ENCODE measurements at regions of chr20 and their contacts with region 1.

Region 1: DNA sequence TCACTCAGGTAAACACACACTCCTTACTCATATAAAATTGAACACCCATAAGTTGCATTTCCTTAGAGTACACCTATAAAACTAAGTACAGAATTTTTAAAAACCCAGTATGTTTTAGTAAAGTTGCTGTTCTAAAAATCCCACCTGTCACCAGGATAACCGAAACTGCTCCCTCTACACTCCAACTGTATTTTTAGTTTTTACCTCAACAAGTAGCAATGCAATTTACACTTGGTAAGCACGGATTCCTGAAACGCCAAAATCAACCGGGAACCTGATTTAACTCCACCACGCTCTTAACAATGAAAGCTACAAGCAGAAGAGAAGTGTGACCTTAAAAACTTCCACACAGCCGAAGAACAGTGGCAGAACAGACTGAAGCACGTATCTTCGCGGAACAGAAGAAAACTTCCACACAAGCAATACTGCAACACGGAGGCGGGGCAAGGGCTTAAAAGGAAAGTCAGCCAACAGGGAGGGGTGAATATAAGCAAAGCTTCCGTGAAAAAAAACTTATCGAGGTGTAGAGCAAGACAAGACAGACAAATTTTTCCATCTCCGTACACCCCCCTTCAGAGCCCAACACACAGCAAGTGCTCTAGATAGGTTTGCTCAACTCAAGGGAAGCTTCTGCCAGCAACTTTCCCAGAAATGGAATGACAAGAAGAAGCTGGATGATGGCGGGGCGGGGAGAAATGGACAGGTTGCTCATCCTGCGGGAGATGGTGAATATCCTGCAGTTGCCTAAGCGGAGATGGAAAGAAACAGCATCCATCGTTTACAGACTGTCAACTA is 1.4 kb downstream of the STAU1 start:
- DNase-seq: peak; percentile 28
- ATAC-seq: no peak
- H3K4me3 ChIP-seq: peak overlapping the region; percentile 88 to 93
- H3K27ac ChIP-seq: peak overlapping the region; percentile 81
- H3K4me1 ChIP-seq: peaks cover 23% of the 10 kb centered on the region
- H3K27me3 ChIP-seq: no peaks in the 10 kb centered on the region
- CTCF ChIP-seq: no peak

Region 2: DNA sequence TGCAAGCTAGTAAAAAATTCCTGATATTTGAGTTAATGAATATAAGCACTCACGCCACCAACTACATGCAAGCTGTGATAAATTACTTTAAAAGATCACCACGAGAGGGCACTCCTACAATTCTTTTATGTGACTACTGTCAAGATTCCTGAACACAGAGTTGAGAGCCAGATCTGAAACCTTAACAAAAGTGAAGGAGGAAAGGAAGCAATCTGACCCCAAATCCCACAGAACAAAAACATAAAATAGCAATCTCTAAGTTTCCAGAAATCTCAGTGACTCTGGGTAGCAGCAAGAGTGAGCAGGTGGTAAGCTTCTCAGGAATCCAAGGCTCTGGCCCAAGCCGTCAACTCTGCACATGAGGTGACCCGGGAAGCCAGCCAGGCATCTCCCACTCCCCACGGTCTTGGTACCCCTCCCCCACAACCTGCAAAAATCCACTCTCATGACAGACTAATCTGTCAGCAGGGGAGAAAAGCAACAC is 53.7 kb before region 1 on chr20:
- CTCF ChIA-PET with region 1: no interaction called
- POLR2A ChIA-PET with region 1: no interaction called
- in situ Hi-C with region 1: loop called (anchors 10 kb)
- intact Hi-C with region 1: no loop called
- DNase-seq: peak; percentile 18
- ATAC-seq: peak; percentile 86
- H3K4me3 ChIP-seq: no peak overlapping the region
- H3K27ac ChIP-seq: no peak overlapping the region
- H3K4me1 ChIP-seq: no peaks in the 10 kb centered on the region
- H3K27me3 ChIP-seq: no peaks in the 10 kb centered on the region
- CTCF ChIP-seq: peak; percentile 72

Region 3: GRCh38 chr20:49207076-49207475 is 20.3 kb after region 1 on chr20:
- CTCF ChIA-PET with region 1: no interaction called
- POLR2A ChIA-PET with region 1: interaction called, 17 read pairs
- in situ Hi-C with region 1: no loop called
- intact Hi-C with region 1: no loop called
- DNase-seq: no peak
- ATAC-seq: peak; percentile 83
- H3K4me3 ChIP-seq: no peak overlapping the region
- H3K27ac ChIP-seq: no peak overlapping the region
- H3K4me1 ChIP-seq: no peaks in the 10 kb centered on the region
- H3K27me3 ChIP-seq: no peaks in the 10 kb centered on the region
- CTCF ChIP-seq: no peak

Region 4: DNA sequence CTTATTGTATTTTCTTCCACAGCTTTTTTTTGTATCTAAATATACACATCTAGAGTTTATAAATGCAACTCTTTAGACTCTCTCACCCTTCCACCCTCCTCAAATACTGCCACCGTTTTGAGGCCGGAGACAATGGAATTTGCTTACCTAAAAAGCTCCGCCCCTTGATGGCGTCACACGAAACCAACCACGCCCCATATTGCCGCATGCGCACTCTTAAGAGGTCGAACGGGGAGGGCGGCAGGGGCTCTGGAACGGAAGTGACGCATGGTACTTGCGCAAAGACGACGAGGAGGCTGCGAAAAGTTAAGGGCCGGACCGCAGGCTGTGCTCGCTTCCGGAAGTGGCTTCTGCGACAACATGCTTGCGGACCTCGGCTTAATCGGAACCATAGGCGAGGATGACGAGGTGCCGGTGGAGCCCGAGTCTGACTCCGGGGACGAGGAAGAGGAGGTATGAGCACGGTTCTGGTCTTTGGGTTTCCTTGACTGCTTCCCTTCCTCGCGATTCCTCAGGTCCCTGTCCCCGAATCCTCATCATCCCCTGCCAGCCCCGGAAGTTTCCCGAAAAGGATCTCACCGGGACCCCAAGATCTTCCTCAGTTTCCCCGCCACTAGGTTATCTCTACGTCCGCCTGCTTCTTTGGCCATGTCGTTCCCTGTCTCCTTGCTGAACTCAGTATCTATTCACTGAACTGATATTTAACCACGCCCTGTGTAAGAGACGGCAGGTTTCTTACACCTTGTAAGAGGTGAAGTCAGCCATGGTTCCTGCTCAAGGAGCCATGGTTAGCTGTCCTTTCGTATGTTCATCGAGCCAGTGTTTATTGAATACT is 32.6 kb after region 1 on chr20 and contains the start of gene DDX27:
- CTCF ChIA-PET with region 1: no interaction called
- POLR2A ChIA-PET with region 1: interaction called, 11 read pairs
- in situ Hi-C with region 1: no loop called
- intact Hi-C with region 1: no loop called
- DNase-seq: peak; percentile 99
- ATAC-seq: peak; percentile 97
- H3K4me3 ChIP-seq: peak within 1 kb of the TSS; percentile 96 to 99
- H3K27ac ChIP-seq: peak within 1 kb of the TSS; percentile 99
- H3K4me1 ChIP-seq: peaks cover 10% of the 10 kb centered on the region; the same call in 1 of the 2 replicates
- H3K27me3 ChIP-seq: no peaks in the 10 kb centered on the region
- CTCF ChIP-seq: no peak
- total RNA-seq, gene DDX27: 63.4 TPM

Region 5: DNA sequence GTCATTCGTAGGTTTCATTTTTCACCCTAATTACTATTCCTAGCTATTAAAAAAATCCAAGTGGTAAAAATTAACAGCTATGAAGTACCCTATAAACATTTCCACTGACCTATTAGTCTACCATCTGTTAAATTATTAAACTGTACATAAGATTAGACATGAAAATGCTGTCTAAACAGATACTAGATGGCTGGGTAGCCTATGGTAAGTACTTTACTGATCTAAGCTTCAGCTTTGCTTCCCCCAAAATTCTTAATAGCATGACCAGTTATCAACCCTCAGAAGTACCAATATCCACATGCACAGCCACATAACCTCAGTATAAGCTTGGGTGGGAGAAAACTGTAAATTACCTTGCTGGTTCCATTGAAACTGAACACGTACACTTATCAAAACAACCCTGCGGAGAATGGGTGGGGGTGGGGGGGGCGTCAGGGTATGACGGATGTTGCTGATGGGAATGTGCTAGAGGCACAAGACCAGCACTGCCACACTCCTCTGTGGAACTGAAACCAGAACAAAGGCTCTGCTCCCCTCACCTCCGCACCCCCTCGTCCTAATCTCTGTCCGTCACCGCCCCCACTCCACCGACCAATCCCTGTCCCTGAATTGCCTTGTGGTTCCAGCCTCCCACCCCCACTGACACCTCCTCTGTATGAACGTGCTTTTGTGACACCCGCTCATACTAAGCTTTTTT is 481.6 kb after region 1 on chr20:
- CTCF ChIA-PET with region 1: no interaction called
- POLR2A ChIA-PET with region 1: no interaction called
- in situ Hi-C with region 1: no loop called
- intact Hi-C with region 1: no loop called
- DNase-seq: no peak
- ATAC-seq: 0 out of 2 replicates have a peak, but pooled peaks have one; percentile 36
- H3K4me3 ChIP-seq: no peak overlapping the region
- H3K27ac ChIP-seq: no peak overlapping the region
- H3K4me1 ChIP-seq: peaks cover 21% of the 10 kb centered on the region
- H3K27me3 ChIP-seq: no peaks in the 10 kb centered on the region
- CTCF ChIP-seq: no peak